HEK293 (cell line): ENCODE measurements at regions of chr17 and their contacts with region 1.

Region 1: DNA sequence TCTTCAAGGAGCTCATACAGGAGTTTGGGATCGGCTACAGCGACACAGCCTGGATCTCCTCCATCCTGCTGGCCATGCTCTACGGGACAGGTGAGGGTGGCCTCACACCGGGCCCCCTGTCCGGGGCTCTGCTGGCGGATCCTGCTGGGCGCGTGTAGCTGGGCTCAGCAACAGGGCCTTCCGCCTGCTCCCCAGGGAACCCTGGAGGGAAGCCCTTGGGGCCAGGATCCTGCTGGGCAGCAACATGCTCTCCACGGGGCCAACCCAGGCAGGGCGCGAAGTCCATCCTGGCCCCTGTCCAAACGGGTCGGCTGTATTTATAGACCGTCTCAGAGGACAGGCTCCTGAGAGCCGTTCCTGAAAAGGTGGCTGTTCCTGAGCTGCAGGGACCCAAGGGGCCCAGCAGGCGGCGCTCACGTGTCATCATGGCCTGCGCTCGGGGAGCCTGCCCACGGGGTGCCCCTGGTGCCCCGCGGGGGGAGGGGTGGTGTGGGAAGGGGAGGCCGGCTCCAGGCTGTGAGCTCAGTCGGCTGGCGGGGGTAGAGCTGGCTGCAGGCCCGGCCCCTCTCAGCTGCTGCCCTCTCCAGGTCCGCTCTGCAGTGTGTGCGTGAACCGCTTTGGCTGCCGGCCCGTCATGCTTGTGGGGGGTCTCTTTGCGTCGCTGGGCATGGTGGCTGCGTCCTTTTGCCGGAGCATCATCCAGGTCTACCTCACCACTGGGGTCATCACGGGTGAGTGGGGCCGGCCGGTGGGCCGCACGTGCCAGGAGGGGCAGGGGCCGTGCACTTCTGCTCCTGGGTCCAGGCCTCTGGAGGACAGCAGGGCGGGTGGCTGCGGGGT is 7.5 kb downstream of the SLC16A3 start:
- H3K4me3 ChIP-seq: no peak overlapping the region
- H3K27ac ChIP-seq: no peak overlapping the region; the same call in 1 of the 2 replicates
- H3K4me1 ChIP-seq: peaks cover 15% of the 10 kb centered on the region
- CTCF ChIP-seq: peak; percentile 89

Region 2: GRCh38 chr17:82219084-82219683 is 17.2 kb before region 1 on chr17:
- CTCF ChIA-PET with region 1: interaction called, 10 read pairs
- POLR2A ChIA-PET with region 1: interaction called, 3 read pairs
- H3K4me3 ChIP-seq: no peak overlapping the region
- H3K27ac ChIP-seq: no peak overlapping the region
- H3K4me1 ChIP-seq: no peaks in the 10 kb centered on the region
- CTCF ChIP-seq: no peak

Region 3: GRCh38 chr17:82273327-82274133 is 37.2 kb after region 1 on chr17 and contains the start of gene CSNK1D:
- CTCF ChIA-PET with region 1: interaction called, 3 read pairs
- POLR2A ChIA-PET with region 1: interaction called, 16 read pairs
- H3K4me3 ChIP-seq: peak within 1 kb of the TSS; percentile 87
- H3K27ac ChIP-seq: peak within 1 kb of the TSS; percentile 100
- H3K4me1 ChIP-seq: peaks cover 19% of the 10 kb centered on the region
- CTCF ChIP-seq: peak; percentile 62

Region 4: GRCh38 chr17:82320956-82321927 is 84.9 kb after region 1 on chr17:
- CTCF ChIA-PET with region 1: interaction called, 27 read pairs
- POLR2A ChIA-PET with region 1: no interaction called
- H3K4me3 ChIP-seq: no peak overlapping the region
- H3K27ac ChIP-seq: no peak overlapping the region
- H3K4me1 ChIP-seq: no peaks in the 10 kb centered on the region; the same call in 1 of the 2 replicates
- CTCF ChIP-seq: peak; percentile 62